ENCODE measurements at regions of chr3 and their contacts with region 1.

Region 1: GRCh38 chr3:96863129-96863740 is 48.8 kb downstream of the EPHA6 start:
- DNase-seq: peak in 1 of 2 experiments; percentile 52
- H3K4me3 ChIP-seq: no peak overlapping the region
- H3K4me3 Mint-ChIP-seq: no peak overlapping the region
- H3K27ac Mint-ChIP-seq: no peak overlapping the region
- H3K4me1 ChIP-seq: no peaks in the 10 kb centered on the region
- H3K4me1 Mint-ChIP-seq: no peaks in the 10 kb centered on the region
- H3K27me3 ChIP-seq: no peaks in the 10 kb centered on the region
- H3K27me3 Mint-ChIP-seq: no peaks in the 10 kb centered on the region
- CTCF ChIP-seq: peak; percentile 68 to 87

Region 2: GRCh38 chr3:96434651-96435050 is 428.6 kb before region 1 on chr3:
- CTCF ChIA-PET with region 1: no interaction called
- POLR2A ChIA-PET with region 1: no interaction called
- intact Hi-C with region 1: no loop called
- DNase-seq: no peak
- H3K4me3 ChIP-seq: no peak overlapping the region
- H3K4me3 Mint-ChIP-seq: no peak overlapping the region
- H3K27ac Mint-ChIP-seq: no peak overlapping the region
- H3K4me1 ChIP-seq: no peaks in the 10 kb centered on the region
- H3K4me1 Mint-ChIP-seq: no peaks in the 10 kb centered on the region
- H3K27me3 ChIP-seq: no peaks in the 10 kb centered on the region
- H3K27me3 Mint-ChIP-seq: no peaks in the 10 kb centered on the region
- CTCF ChIP-seq: no peak

Region 3: GRCh38 chr3:97021778-97022177 is 158.5 kb after region 1 on chr3:
- CTCF ChIA-PET with region 1: no interaction called
- POLR2A ChIA-PET with region 1: no interaction called
- intact Hi-C with region 1: loop called (anchors 2 kb)
- DNase-seq: no peak
- H3K4me3 ChIP-seq: no peak overlapping the region
- H3K4me3 Mint-ChIP-seq: no peak overlapping the region
- H3K27ac Mint-ChIP-seq: no peak overlapping the region
- H3K4me1 ChIP-seq: no peaks in the 10 kb centered on the region
- H3K4me1 Mint-ChIP-seq: no peaks in the 10 kb centered on the region
- H3K27me3 ChIP-seq: no peaks in the 10 kb centered on the region
- H3K27me3 Mint-ChIP-seq: no peaks in the 10 kb centered on the region
- CTCF ChIP-seq: no peak

Region 4: DNA sequence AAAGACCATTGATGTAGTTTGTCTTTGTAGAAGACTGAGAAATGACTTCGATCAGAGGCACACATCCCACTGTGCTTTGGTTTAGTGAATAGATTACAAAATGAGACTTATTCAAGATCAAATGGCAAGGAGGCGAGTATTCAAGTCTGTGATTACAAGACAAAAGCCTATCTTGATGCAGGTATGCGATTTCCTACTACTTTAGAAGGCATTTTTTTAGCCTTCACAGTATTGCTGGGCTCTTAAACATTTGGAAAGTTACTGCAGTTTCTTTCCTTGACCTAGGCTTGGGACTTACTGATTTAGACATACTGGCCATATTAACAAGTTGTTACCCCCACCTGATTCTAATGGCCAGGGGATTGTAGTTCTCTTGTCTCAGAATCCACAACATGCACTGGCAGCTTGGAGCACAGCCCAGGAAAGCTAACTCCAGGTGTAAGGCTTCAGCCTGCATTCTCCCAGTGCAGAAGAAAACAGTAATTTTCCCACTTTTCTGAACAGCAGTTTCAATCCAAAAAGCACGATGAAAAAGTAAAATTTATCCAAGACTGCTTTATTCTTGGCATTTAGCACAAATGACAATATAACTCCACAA is 262.8 kb after region 1 on chr3:
- CTCF ChIA-PET with region 1: no interaction called
- POLR2A ChIA-PET with region 1: no interaction called
- intact Hi-C with region 1: loop called (anchors 10 kb)
- DNase-seq: no peak
- H3K4me3 ChIP-seq: no peak overlapping the region
- H3K4me3 Mint-ChIP-seq: no peak overlapping the region
- H3K27ac Mint-ChIP-seq: no peak overlapping the region
- H3K4me1 ChIP-seq: no peaks in the 10 kb centered on the region
- H3K4me1 Mint-ChIP-seq: no peaks in the 10 kb centered on the region
- H3K27me3 ChIP-seq: no peaks in the 10 kb centered on the region
- H3K27me3 Mint-ChIP-seq: peaks cover 3% of the 10 kb centered on the region
- CTCF ChIP-seq: no peak

Region 5: DNA sequence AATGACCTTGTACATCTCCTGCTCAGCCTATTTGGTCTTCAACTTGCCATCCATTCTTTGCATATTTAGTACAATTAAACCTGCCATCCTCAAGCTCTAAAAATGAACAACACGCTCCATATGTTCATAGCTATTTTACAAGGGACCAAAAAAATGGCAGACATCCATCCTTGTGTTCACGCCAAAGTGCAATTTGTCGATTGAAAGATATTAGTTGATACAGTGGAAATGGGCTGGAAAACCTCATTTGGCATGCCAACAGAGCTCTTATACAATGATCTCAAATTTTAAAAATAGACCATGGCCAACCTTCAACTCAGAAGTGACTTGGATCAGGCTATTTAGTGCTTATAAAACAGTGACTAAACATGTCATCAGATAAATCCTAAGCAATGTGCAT is 487.7 kb after region 1 on chr3:
- CTCF ChIA-PET with region 1: no interaction called
- POLR2A ChIA-PET with region 1: no interaction called
- intact Hi-C with region 1: loop called (anchors 10 kb)
- DNase-seq: no peak
- H3K4me3 ChIP-seq: no peak overlapping the region
- H3K4me3 Mint-ChIP-seq: no peak overlapping the region
- H3K27ac Mint-ChIP-seq: no peak overlapping the region
- H3K4me1 ChIP-seq: no peaks in the 10 kb centered on the region
- H3K4me1 Mint-ChIP-seq: no peaks in the 10 kb centered on the region
- H3K27me3 ChIP-seq: no peaks in the 10 kb centered on the region
- H3K27me3 Mint-ChIP-seq: peaks cover 2% of the 10 kb centered on the region
- CTCF ChIP-seq: no peak

Region 6: DNA sequence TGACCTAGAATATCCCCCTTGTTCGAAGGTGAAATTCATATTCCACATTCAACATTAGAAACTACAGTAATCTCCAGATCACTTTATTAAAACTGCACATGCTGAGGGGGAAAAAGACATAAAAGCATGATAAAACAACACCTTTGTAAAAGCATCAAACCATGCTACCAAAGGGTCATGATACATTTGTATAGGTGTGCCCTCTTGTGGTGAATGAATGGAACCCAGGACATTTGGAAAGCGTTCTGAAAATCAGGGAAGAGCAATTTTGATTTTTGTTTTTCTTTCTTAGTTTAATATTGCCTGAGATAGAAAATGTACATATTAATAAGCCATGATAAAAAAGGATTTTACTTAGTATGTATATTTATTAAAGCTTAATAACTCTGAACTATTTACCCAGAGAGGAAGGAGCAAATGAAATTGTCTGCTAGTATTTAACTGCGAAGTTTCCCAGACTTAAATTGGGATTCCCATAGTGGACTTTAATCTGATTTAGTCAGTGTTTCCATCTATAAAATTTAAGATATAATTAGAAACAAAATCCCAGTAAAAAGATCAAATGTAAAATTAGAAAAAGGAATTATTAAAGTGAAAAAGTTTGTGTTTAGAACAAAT is 795.5 kb after region 1 on chr3:
- CTCF ChIA-PET with region 1: no interaction called
- POLR2A ChIA-PET with region 1: no interaction called
- intact Hi-C with region 1: loop called (anchors 1 kb)
- DNase-seq: peak in 1 of 2 experiments; percentile 4
- H3K4me3 ChIP-seq: no peak overlapping the region
- H3K4me3 Mint-ChIP-seq: no peak overlapping the region
- H3K27ac Mint-ChIP-seq: no peak overlapping the region
- H3K4me1 ChIP-seq: no peaks in the 10 kb centered on the region
- H3K4me1 Mint-ChIP-seq: no peaks in the 10 kb centered on the region
- H3K27me3 ChIP-seq: no peaks in the 10 kb centered on the region
- H3K27me3 Mint-ChIP-seq: no peaks in the 10 kb centered on the region
- CTCF ChIP-seq: peak; percentile 61 to 66

Region 7: GRCh38 chr3:97719156-97719821 is 856.1 kb after region 1 on chr3:
- CTCF ChIA-PET with region 1: interaction called, 4 read pairs
- POLR2A ChIA-PET with region 1: no interaction called
- intact Hi-C with region 1: loop called (anchors 1 kb)
- DNase-seq: peak; percentile 57 to 69
- H3K4me3 ChIP-seq: no peak overlapping the region
- H3K4me3 Mint-ChIP-seq: no peak overlapping the region
- H3K27ac Mint-ChIP-seq: no peak overlapping the region
- H3K4me1 ChIP-seq: no peaks in the 10 kb centered on the region
- H3K4me1 Mint-ChIP-seq: no peaks in the 10 kb centered on the region
- H3K27me3 ChIP-seq: no peaks in the 10 kb centered on the region
- H3K27me3 Mint-ChIP-seq: peaks cover 6% of the 10 kb centered on the region
- CTCF ChIP-seq: peak; percentile 73 to 95